ENCODE measurements at regions of chr1 and their contacts with region 1.

Region 1: DNA sequence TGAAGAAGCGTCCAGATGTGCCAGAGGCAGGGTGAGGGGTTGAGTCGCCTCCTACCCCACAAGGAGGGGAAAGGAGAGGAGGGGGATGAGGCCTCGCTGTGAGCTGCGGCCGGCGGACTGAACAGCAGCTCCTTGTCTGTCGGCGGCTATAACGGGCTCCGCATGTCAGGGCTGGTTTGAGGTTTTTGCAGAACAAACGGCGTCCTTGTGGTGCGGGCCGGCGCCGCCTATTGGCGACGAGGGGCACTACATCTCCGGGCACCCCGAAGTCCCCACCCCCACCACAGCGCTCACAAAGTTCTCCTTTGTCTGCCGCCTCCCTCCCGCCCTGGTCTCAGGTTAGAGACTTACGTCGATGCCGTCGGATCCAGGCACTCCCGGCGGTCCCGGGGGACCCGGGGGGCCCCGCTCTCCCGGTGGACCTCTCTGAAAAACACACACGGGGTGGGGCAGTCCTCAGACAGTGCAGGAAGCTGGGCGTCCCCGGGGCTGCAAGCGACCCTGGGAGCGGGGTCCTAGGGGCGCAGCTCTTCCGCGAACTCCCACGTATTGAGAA is 1.8 kb downstream of the COL9A2 start:
- DNase-seq: peak; percentile 61 to 91 (median 89)
- H3K4me3 ChIP-seq: peak overlapping the region; percentile 43 to 85 (median 66)
- H3K27ac ChIP-seq: peak overlapping the region; percentile 76 to 100 (median 98)
- H3K27me3 ChIP-seq: peaks cover 0 to 30% (median 13%) of the 10 kb centered on the region in 45 donors
- CTCF ChIP-seq: peak; percentile 69 to 98 (median 90)

Region 2: DNA sequence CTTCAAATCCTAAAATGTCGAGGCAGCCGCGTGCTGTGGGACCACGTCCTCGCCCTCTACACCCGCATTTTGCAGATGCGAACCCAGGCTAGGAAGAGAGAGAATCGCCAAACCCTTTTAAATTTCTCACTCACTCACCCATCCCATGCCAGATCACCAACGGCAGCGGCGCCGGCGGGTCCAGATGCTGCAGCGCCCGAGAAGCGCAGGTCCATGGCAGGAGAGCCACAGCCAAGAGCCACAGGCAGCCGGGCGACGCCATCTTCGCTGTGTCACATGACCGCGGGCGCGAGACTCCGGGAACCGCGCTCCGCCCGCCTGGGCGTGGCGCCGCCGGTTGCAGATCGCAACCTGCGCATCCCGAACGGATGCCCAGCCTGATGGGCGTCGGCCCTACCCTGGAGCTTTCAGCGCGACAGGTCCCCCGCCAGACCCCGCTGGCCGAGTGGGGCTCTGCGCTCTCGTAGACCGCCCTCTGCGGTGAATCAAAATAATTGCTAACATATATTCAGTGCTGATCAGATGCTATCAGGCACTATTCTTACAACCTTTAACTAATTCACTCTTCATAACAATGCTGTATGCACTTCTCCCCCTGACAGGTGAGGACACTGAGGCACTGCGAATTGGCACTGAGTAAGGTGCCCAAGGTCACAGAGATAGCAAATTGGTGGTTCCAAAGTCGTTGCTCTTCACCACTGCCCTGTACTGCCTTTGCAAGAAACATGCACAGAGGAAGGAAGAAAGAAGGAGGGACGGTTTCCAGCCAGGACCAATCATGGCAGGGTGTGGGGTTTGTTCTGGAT is 218.1 kb before region 1 on chr1 and contains the start of gene PPT1:
- intact Hi-C with region 1: loop called in 1 of 2 experiments (anchors 5 kb)
- DNase-seq: peak; percentile 79 to 92 (median 87)
- H3K4me3 ChIP-seq: peak within 1 kb of the TSS; percentile 58 to 97 (median 81)
- H3K27ac ChIP-seq: peak within 1 kb of the TSS; percentile 66 to 97 (median 85)
- H3K27me3 ChIP-seq: no peaks in the 10 kb centered on the region
- CTCF ChIP-seq: peak in 52 of 56 donors; percentile 7 to 66 (median 40)
- total RNA-seq, gene PPT1: 72.4 to 166 (median 118) TPM

Region 3: GRCh38 chr1:40257688-40258444 is 57.5 kb before region 1 on chr1 and contains the start of gene ZMPSTE24:
- intact Hi-C with region 1: loop called (anchors 1 to 2 kb)
- DNase-seq: peak; percentile 91 to 97 (median 95)
- H3K4me3 ChIP-seq: peak within 1 kb of the TSS; percentile 65 to 100 (median 91)
- H3K27ac ChIP-seq: peak within 1 kb of the TSS; percentile 75 to 99 (median 93)
- H3K27me3 ChIP-seq: no peaks in the 10 kb centered on the region
- CTCF ChIP-seq: peak in 39 of 56 donors; percentile 4 to 60 (median 25)
- total RNA-seq, gene ZMPSTE24: 20.8 to 36.8 (median 28.6) TPM

Region 4: DNA sequence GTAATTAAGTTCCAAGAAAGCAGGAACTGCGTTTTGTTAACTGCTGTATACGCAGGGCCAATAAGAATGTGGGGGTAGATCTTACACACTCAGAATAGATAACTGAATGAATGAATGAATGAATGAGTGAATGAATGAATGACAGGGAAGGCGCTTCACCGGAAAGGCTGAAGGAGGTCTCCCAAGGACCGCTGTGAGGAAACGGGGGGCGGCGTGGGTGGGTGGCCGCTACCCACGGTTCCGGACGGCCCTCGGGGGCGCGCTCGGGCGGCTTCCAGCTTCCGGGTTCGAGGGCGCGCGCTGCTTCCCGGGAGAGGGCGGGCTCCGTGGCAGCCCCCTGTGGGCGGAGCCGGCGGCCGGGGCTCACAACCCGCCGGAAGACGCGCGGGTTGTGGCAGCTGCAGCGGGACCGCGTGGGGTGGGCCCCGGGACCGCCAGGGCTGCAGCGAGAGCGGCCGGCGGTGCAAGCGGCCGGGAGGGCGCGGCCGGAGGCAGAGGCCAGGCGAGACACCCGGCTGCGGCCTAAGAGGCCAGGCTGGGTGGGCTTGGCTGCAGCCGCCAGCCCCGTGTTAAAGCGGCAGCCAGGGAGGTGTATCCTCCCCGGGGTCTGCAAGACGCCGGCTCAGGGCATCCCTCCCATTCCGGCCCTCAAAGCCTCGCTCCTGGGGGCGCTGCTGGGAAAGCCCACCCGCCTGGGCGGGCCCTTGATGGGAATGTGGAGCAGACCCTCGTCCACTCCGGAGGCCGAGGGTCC is 161.8 kb after region 1 on chr1 and contains the start of gene ZFP69:
- intact Hi-C with region 1: no loop called
- DNase-seq: peak in 7 of 10 donors; percentile 31 to 75 (median 43)
- H3K4me3 ChIP-seq: peak within 1 kb of the TSS; percentile 56 to 89 (median 76)
- H3K27ac ChIP-seq: peak within 1 kb of the TSS in 39 of 59 donors; percentile 2 to 85 (median 48)
- H3K27me3 ChIP-seq: no peaks in the 10 kb centered on the region
- CTCF ChIP-seq: peak in 21 of 56 donors; percentile 6 to 42 (median 18)
- total RNA-seq, gene ZFP69: 0.95 to 5.3 (median 2.8) TPM

Region 5: DNA sequence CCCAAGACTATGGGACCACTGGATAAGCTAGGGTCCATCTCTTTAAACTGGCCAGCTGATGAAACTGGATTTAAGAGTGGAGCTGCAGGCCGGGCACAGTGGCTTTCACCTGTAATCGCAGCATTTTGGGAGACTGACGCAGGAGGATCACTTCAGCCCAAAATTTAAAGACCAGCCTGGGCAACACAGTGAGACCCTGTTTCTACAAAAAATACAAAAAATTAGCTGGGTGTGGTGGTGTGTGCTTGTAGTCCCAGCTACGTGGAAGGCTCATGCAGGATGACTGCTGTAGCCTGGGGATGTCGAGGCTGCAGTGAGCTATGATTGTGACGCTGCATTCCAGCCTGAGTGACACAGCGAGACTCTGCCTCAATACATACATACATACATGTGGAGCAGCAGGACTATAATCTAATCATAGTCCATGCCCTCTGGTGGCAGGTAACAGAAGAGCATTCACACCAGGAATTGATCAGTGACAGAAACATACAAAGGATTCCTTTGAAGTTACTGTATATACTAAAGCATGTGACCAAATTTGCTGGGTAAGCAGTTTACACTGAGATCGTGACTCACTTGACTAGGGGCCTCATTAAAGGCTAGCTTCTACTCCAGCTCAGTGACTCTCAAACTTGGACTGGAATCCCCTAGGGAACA is 807.7 kb after region 1 on chr1:
- intact Hi-C with region 1: no loop called
- DNase-seq: no peak
- H3K4me3 ChIP-seq: no peak overlapping the region
- H3K27ac ChIP-seq: no peak overlapping the region
- H3K27me3 ChIP-seq: no peaks in the 10 kb centered on the region
- CTCF ChIP-seq: peak in 38 of 56 donors; percentile 9 to 48 (median 30)